K562 (cell line): ENCODE measurements at regions of chr3 and their contacts with region 1.

Region 1: DNA sequence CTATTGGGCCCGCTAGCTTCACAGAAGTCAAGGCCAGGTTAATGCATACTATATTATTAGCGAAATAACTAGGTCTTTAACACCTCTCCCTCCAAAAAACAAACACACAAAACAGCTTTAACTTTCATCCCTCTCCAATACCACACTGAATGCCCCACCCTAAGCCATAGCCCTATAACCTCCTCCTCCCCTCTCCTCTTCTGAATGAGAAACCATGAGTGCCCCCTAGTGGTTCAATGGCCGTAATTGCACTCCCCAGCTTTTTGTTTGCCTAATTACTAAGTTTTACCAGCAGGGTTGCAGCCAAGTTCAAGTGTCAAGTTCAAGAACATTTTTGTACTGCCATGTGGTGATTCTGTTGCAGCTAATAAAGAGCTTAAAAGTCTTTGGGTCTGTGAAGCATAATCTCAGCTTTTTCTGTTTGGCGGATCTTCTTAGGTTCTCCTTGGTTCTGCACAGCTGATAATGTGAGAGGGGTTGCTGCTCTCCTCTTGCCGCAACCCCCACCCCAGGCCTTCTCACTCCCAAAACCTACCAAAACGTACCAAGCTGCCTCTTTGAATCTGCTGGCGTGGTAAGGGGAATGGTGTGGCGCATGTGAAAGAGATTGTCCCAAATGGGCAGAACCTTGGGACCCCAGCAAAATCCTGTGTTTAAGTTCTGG is 57.9 kb downstream of the RPL22L1 start:
- DNase-seq: peak; percentile 83 to 90 (median 87)
- ATAC-seq: peak; percentile 83
- H3K4me3 ChIP-seq: no peak overlapping the region
- H3K27ac ChIP-seq: no peak overlapping the region
- H3K4me1 ChIP-seq: peaks cover 21 to 48% of the 10 kb centered on the region in 2 experiments
- H3K27me3 ChIP-seq: no peaks in the 10 kb centered on the region
- CTCF ChIP-seq: peak; percentile 91 to 99 (median 98)
- EP300 ChIP-seq: peak; percentile 41; the same call in 1 of the 2 replicates
- POLR2A ChIP-seq: no peak
- RAD21 ChIP-seq: peak; percentile 97 to 98

Region 2: DNA sequence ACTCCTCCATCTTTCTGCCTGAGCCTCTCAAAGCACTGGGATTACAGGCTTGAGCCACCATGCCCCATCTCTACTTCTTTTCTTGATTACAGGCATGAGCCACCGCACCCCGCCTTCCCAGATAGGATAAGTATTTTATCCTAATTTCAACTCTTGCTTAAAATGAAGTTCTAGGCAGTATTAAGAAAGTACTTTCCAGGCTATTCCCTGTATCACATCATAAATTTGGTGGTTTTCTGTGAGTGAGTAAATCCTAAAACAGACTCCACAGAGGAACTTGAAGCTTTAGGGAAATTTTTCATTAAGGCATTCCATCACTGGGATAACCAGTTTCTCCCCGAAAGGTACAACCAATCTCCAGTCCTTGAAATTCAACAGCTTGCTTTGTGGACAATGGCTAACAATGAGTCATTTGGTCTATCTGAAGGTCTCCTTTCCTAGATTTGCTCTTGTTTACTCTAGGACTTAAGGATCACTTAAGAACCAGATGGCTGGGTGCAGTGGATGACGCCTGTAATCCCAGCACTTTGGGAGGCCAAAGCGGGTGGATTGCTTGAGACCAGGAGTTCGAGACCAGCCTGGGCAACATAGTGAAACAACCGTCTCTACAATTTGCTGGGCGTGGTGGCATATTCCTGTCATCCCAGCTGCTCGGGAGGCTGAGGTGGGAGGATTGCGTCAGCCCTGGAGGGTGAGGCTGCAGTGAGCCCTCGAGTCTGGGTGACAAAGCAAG is 504.2 kb before region 1 on chr3:
- CTCF ChIA-PET with region 1: no interaction called
- POLR2A ChIA-PET with region 1: no interaction called
- in situ Hi-C with region 1: loop called (anchors 5 kb)
- intact Hi-C with region 1: loop called (anchors 5 kb)
- DNase-seq: peak in 1 of 4 experiments; percentile 17
- ATAC-seq: peak; percentile 43; the same call in 2 of the 3 replicates
- H3K4me3 ChIP-seq: no peak overlapping the region
- H3K27ac ChIP-seq: no peak overlapping the region; the same call in 2 of the 3 replicates
- H3K4me1 ChIP-seq: peaks cover 0 to 5% of the 10 kb centered on the region in 2 experiments; a peak in 1 of 5 replicates
- H3K27me3 ChIP-seq: no peaks in the 10 kb centered on the region
- CTCF ChIP-seq: no peak
- EP300 ChIP-seq: no peak
- POLR2A ChIP-seq: no peak
- RAD21 ChIP-seq: no peak

Region 3: DNA sequence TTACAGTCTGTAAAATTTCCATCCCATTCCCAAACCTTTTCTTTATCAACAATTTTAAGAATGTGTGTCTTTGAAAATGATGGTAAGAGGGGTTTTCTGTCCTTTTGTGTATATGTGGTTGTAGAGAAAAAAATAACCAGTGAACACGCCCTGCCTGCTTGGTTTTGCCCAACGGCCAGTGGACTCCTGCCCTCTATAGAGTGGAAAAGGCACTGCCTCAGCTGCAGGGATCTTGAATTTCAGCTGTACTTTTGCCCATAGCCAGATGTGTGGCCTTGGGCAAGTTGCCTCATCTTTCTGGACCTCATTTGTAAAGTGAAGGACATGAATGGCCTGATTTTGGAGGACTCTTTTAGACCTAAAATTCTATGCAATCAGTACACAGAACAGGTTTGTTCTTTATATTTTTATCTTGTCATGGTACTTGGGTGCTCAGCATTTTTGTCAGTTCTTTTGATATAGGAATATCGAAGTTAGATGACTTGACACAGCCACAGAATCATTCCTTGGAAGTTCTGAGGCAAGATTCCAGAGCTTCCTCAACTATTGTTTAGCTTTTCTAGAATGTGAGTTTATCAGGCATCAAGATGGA is 312.4 kb before region 1 on chr3:
- CTCF ChIA-PET with region 1: no interaction called
- POLR2A ChIA-PET with region 1: no interaction called
- in situ Hi-C with region 1: no loop called
- intact Hi-C with region 1: loop called (anchors 5 kb)
- DNase-seq: peak; percentile 22 to 64 (median 44)
- ATAC-seq: peak; percentile 98
- H3K4me3 ChIP-seq: no peak overlapping the region
- H3K27ac ChIP-seq: no peak overlapping the region
- H3K4me1 ChIP-seq: peaks cover 0 to 10% of the 10 kb centered on the region in 2 experiments; a peak in 2 of 5 replicates
- H3K27me3 ChIP-seq: no peaks in the 10 kb centered on the region; a peak in 1 of 5 replicates
- CTCF ChIP-seq: peak; percentile 73 to 76 (median 75)
- EP300 ChIP-seq: no peak
- POLR2A ChIP-seq: no peak
- RAD21 ChIP-seq: peak; percentile 60 to 69

Region 4: DNA sequence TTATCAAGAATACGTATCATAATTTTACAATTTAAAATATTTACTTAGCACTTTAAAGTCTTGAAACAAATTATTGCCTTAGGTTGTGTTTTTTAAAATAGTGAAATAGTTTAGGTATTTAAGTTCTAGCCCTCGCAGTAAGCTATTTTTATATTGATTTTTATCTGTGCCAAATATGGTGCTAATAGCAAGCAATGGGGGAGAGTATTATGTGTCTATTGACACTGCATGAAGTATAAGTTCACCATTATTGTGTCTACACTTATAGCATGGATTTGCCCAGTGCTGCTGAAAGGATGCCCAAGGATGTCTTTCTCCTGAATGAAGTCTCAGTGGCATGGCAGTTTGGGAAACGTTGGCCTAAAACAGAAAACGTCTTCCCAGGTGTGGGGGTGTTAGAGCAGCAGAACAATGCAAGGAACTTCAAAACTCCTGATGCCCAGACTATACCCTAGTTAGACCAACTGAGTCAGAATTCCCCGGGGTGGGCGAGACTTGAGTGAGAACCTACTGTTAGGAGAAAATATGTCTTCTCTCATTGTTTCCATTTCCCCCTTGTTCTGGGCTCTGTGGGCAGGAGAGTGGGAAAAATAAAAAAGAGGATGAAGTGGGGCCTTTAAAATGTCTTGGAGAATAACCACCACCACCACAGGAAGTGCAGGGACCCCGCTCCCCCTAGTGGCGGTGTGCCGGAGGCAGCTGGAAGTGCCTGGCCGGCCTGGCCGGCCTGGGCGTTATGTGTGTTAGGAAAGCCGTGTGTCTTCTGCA is 122.0 kb before region 1 on chr3:
- CTCF ChIA-PET with region 1: no interaction called
- POLR2A ChIA-PET with region 1: no interaction called
- in situ Hi-C with region 1: loop called (anchors 5 kb)
- intact Hi-C with region 1: loop called (anchors 1 kb)
- DNase-seq: peak; percentile 81 to 90 (median 84)
- ATAC-seq: peak; percentile 100
- H3K4me3 ChIP-seq: no peak overlapping the region
- H3K27ac ChIP-seq: no peak overlapping the region
- H3K4me1 ChIP-seq: peaks cover 12 to 19% of the 10 kb centered on the region in 2 experiments
- H3K27me3 ChIP-seq: no peaks in the 10 kb centered on the region
- CTCF ChIP-seq: peak; percentile 88 to 95 (median 91)
- EP300 ChIP-seq: 0 out of 2 replicates have a peak, but pooled peaks have one; percentile 6
- POLR2A ChIP-seq: no peak
- RAD21 ChIP-seq: peak; percentile 92 to 94

Region 5: GRCh38 chr3:170726976-170727661 is 84.9 kb before region 1 on chr3:
- CTCF ChIA-PET with region 1: interaction called, 3 read pairs
- POLR2A ChIA-PET with region 1: no interaction called
- in situ Hi-C with region 1: no loop called
- intact Hi-C with region 1: loop called (anchors 1 kb)
- DNase-seq: peak; percentile 51 to 81 (median 60)
- ATAC-seq: peak; percentile 65
- H3K4me3 ChIP-seq: no peak overlapping the region
- H3K27ac ChIP-seq: peak overlapping the region; percentile 83
- H3K4me1 ChIP-seq: peaks cover 42 to 79% of the 10 kb centered on the region in 2 experiments
- H3K27me3 ChIP-seq: no peaks in the 10 kb centered on the region
- CTCF ChIP-seq: no peak
- EP300 ChIP-seq: peak; percentile 79
- POLR2A ChIP-seq: 0 out of 2 replicates have a peak, but pooled peaks have one; percentile 28
- RAD21 ChIP-seq: no peak

Region 6: DNA sequence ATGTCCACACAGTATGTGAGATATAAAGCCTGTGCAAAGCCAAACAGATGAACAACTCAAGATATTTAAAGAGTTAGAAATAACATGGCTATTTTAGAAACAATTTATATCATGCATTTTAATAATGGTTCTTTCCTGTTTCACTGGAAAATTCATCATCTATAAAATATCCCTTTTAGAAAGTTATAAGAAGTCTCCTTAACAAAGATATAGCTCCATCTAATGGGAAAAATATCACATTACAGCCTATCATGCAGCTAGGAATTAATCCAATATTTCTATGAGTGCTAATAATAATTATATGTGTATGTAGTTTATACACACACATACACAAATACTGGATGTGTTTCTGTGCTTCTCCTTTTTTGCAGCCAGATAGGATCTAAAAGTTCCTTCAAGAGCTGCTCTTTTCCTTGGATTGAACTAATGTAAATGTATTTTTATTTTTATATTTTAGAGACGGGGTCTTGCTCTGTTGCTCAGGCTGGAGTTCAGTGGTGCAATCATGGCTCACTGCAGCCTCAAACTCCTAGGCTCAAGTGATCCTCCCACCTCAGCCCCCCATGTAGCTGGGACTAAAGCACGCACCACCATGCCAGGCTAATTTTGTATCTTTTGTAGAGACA is 36.3 kb after region 1 on chr3:
- CTCF ChIA-PET with region 1: no interaction called
- POLR2A ChIA-PET with region 1: no interaction called
- in situ Hi-C with region 1: loop called (anchors 5 kb)
- intact Hi-C with region 1: loop called (anchors 1 kb)
- DNase-seq: peak in 1 of 4 experiments; percentile 19
- ATAC-seq: 0 out of 3 replicates have a peak, but pooled peaks have one; percentile 42
- H3K4me3 ChIP-seq: no peak overlapping the region
- H3K27ac ChIP-seq: no peak overlapping the region
- H3K4me1 ChIP-seq: no peaks in the 10 kb centered on the region
- H3K27me3 ChIP-seq: no peaks in the 10 kb centered on the region; a peak in 1 of 5 replicates
- CTCF ChIP-seq: peak in 1 of 3 experiments; percentile 68; a peak in 4 of 6 replicates
- EP300 ChIP-seq: no peak
- POLR2A ChIP-seq: no peak
- RAD21 ChIP-seq: peak; percentile 77 to 83

Region 7: GRCh38 chr3:171187706-171188290 is 375.7 kb after region 1 on chr3:
- CTCF ChIA-PET with region 1: no interaction called
- POLR2A ChIA-PET with region 1: no interaction called
- in situ Hi-C with region 1: no loop called
- intact Hi-C with region 1: no loop called
- DNase-seq: peak; percentile 32 to 63 (median 46)
- ATAC-seq: peak; percentile 62
- H3K4me3 ChIP-seq: no peak overlapping the region
- H3K27ac ChIP-seq: no peak overlapping the region
- H3K4me1 ChIP-seq: peaks cover 4 to 35% of the 10 kb centered on the region in 2 experiments
- H3K27me3 ChIP-seq: no peaks in the 10 kb centered on the region
- CTCF ChIP-seq: peak; percentile 67 to 71 (median 70)
- EP300 ChIP-seq: no peak
- POLR2A ChIP-seq: no peak
- RAD21 ChIP-seq: peak; percentile 67 to 81